GM12878 (cell line): ENCODE measurements at regions of chr10 and their contacts with region 1.

Region 1: DNA sequence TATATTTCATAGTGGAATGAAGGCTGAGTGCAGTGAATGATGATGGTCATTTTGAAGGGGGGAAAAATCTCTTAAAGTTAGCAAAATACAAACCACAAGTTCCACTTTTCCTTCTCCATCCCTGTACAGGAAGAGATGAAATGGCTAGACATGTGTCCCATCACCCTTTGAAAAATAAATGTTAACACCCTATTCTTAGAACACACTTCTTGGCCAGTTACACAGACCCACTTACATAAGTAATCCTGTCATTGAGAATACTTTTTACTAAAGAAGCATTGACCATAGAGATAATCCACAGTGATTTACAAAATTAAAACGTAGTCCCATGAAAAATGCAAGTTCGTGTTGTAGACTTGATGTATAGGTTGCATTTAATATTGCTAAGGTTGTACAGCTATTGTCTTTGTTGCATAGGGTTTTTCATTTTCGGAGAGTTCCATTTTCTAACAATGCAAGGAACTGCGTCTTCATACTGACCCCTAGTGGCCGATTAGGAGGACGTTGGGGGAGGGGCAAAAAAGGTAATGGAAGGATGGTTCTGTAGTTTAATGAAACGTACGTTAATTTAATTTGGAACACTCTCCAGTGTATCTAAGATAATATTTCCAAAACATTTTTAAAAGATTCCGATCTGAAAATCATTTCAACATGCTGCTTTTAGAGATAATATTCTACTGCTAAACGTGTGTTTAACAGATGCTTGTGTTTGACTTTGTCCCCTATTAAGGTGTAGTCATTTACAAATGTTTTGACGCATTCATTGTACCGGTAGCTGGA is 60.9 kb downstream of the ARMC3 start:
- DNase-seq: peak; percentile 44
- ATAC-seq: peak; percentile 75
- H3K4me3 ChIP-seq: no peak overlapping the region
- H3K27ac ChIP-seq: no peak overlapping the region
- H3K4me1 ChIP-seq: no peaks in the 10 kb centered on the region
- H3K27me3 ChIP-seq: no peaks in the 10 kb centered on the region
- CTCF ChIP-seq: peak; percentile 81 to 87 (median 86)
- EP300 ChIP-seq: no peak
- POLR2A ChIP-seq: no peak
- RAD21 ChIP-seq: peak; percentile 99

Region 2: GRCh38 chr10:22003079-22003913 is 985.5 kb before region 1 on chr10 and contains the start of gene DNAJC1:
- CTCF ChIA-PET with region 1: interaction called, 16 read pairs
- POLR2A ChIA-PET with region 1: no interaction called
- RAD21 ChIA-PET with region 1: interaction called, 4 read pairs
- SMC1A ChIA-PET with region 1: no interaction called
- in situ Hi-C with region 1: loop called (anchors 5 kb)
- intact Hi-C with region 1: no loop called
- DNase-seq: peak; percentile 83
- ATAC-seq: peak; percentile 94
- H3K4me3 ChIP-seq: peak within 1 kb of the TSS; percentile 78
- H3K27ac ChIP-seq: peak within 1 kb of the TSS; percentile 91
- H3K4me1 ChIP-seq: peaks cover 16% of the 10 kb centered on the region
- H3K27me3 ChIP-seq: no peaks in the 10 kb centered on the region
- CTCF ChIP-seq: 0 out of 6 replicates have a peak, but pooled peaks of 1 of the 3 experiments have one; percentile 1
- EP300 ChIP-seq: no peak
- POLR2A ChIP-seq: peak; percentile 89
- RAD21 ChIP-seq: no peak
- polyA plus RNA-seq, gene DNAJC1: 2.5 to 6.4 TPM

Region 3: DNA sequence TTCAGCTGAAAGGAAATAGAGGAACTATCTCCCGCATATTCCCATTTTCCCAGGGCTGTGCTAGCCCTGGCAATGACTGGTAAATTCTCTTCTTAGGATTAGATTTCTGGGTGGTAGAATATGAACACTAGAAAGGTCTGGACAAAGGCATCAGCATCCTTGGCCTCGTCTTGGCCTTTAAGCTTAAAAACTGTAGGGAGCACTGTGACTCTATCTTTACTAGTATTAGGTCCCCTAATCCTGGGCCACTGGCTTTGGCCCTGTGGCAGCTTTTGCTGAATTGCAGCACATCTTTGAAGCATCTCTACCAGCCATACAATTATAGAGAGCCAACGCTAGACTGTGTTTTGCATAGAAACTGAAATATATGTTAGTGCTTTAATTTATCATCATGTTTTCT is 729.5 kb before region 1 on chr10:
- CTCF ChIA-PET with region 1: interaction called, 13 read pairs
- POLR2A ChIA-PET with region 1: no interaction called
- RAD21 ChIA-PET with region 1: interaction called, 3 read pairs
- SMC1A ChIA-PET with region 1: interaction called, 7 read pairs
- in situ Hi-C with region 1: loop called (anchors 25 kb)
- intact Hi-C with region 1: loop called (anchors 5 kb)
- DNase-seq: no peak
- ATAC-seq: peak; percentile 82
- H3K4me3 ChIP-seq: no peak overlapping the region
- H3K27ac ChIP-seq: no peak overlapping the region
- H3K4me1 ChIP-seq: no peaks in the 10 kb centered on the region
- H3K27me3 ChIP-seq: no peaks in the 10 kb centered on the region; a peak in 1 of 4 replicates
- CTCF ChIP-seq: peak; percentile 14 to 48 (median 33); a peak in 3 of 6 replicates
- EP300 ChIP-seq: no peak
- POLR2A ChIP-seq: no peak
- RAD21 ChIP-seq: peak; percentile 68

Region 4: GRCh38 chr10:22344249-22344648 is 644.5 kb before region 1 on chr10:
- CTCF ChIA-PET with region 1: no interaction called
- POLR2A ChIA-PET with region 1: no interaction called
- RAD21 ChIA-PET with region 1: no interaction called
- SMC1A ChIA-PET with region 1: no interaction called
- in situ Hi-C with region 1: no loop called
- intact Hi-C with region 1: no loop called
- DNase-seq: no peak
- ATAC-seq: no peak
- H3K4me3 ChIP-seq: no peak overlapping the region
- H3K27ac ChIP-seq: no peak overlapping the region
- H3K4me1 ChIP-seq: peaks cover 16% of the 10 kb centered on the region
- H3K27me3 ChIP-seq: peaks cover 5 to 11% of the 10 kb centered on the region in 2 experiments
- CTCF ChIP-seq: no peak
- EP300 ChIP-seq: no peak
- POLR2A ChIP-seq: no peak
- RAD21 ChIP-seq: no peak

Region 5: DNA sequence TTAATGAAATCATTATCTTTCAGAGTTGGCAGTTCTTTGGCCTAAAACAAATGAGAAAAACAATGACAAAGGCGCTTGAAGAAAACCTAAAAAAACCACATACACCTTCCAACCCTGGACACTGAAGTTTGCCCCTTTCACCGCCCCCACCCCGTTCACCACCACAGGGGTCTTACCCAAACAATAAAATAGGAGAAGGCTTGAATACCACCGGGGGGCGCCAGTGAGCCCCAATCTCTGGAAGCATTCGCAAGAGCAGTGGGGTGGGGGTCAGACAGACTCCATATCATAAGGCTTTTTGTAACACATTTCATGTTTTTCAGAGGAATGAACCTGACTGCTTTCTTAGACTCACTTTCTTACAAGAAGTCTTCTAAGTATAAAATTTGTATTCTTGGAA is 438.0 kb before region 1 on chr10:
- CTCF ChIA-PET with region 1: interaction called, 4 read pairs
- POLR2A ChIA-PET with region 1: no interaction called
- RAD21 ChIA-PET with region 1: interaction called, 4 read pairs
- SMC1A ChIA-PET with region 1: interaction called, 9 read pairs
- in situ Hi-C with region 1: no loop called
- intact Hi-C with region 1: loop called (anchors 5 kb)
- DNase-seq: no peak
- ATAC-seq: peak; percentile 71
- H3K4me3 ChIP-seq: no peak overlapping the region
- H3K27ac ChIP-seq: no peak overlapping the region
- H3K4me1 ChIP-seq: no peaks in the 10 kb centered on the region
- H3K27me3 ChIP-seq: no peaks in the 10 kb centered on the region
- CTCF ChIP-seq: peak; percentile 45 to 68 (median 52)
- EP300 ChIP-seq: no peak
- POLR2A ChIP-seq: no peak
- RAD21 ChIP-seq: peak; percentile 64

Region 6: DNA sequence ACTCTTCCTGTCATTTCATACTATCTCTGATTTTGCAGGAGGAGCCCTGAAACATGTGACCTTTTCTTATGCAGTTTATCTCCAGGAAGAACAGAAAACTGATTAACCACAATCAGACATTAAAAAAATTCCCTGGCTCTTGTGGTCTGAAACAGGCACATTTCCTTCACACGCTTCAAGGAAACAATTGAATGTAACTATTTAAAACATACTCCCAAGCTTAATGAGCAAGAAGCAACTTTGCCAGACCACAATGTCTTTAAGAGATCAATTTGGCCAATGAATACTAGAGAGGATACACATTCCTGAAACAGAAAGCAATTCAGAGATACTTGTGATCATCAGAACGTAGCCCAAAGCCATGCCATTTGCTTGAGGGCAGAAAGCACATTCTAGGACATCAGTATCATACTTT is 340.2 kb before region 1 on chr10:
- CTCF ChIA-PET with region 1: interaction called, 3 read pairs
- POLR2A ChIA-PET with region 1: no interaction called
- RAD21 ChIA-PET with region 1: no interaction called
- SMC1A ChIA-PET with region 1: no interaction called
- in situ Hi-C with region 1: no loop called
- intact Hi-C with region 1: loop called (anchors 5 kb)
- DNase-seq: peak; percentile 75
- ATAC-seq: peak; percentile 72
- H3K4me3 ChIP-seq: no peak overlapping the region
- H3K27ac ChIP-seq: peak overlapping the region; percentile 78
- H3K4me1 ChIP-seq: peaks cover 83% of the 10 kb centered on the region
- H3K27me3 ChIP-seq: no peaks in the 10 kb centered on the region
- CTCF ChIP-seq: no peak
- EP300 ChIP-seq: peak; percentile 32 to 50; a peak in 2 of 4 replicates
- POLR2A ChIP-seq: no peak
- RAD21 ChIP-seq: no peak

Region 7: DNA sequence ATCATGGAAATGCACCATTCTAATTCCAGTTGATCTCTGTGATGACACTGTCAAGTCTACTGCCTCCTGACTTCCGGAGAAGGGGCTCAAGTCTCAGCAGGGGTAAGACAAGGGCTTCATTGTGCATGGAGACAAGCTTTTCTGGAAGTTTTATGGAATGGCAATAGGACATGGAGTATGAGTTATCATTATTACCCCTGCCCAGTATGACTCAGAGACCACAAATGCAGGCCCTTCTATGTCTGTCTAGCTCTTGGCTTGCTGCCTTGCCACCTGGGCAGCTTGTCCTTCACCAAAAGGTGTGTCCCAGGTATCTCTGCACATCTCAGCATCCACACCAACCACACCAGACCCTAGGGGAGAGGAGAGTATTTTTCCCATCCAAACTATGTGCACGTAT is 1185.2 kb after region 1 on chr10:
- CTCF ChIA-PET with region 1: no interaction called
- POLR2A ChIA-PET with region 1: no interaction called
- RAD21 ChIA-PET with region 1: no interaction called
- SMC1A ChIA-PET with region 1: no interaction called
- in situ Hi-C with region 1: no loop called
- intact Hi-C with region 1: no loop called
- DNase-seq: no peak
- ATAC-seq: no peak
- H3K4me3 ChIP-seq: no peak overlapping the region
- H3K27ac ChIP-seq: no peak overlapping the region
- H3K4me1 ChIP-seq: no peaks in the 10 kb centered on the region
- H3K27me3 ChIP-seq: no peaks in the 10 kb centered on the region
- CTCF ChIP-seq: no peak
- EP300 ChIP-seq: no peak
- POLR2A ChIP-seq: no peak
- RAD21 ChIP-seq: no peak